Caco-2 (cell line): ENCODE measurements at regions of chr9 and their contacts with region 1.

Region 1: DNA sequence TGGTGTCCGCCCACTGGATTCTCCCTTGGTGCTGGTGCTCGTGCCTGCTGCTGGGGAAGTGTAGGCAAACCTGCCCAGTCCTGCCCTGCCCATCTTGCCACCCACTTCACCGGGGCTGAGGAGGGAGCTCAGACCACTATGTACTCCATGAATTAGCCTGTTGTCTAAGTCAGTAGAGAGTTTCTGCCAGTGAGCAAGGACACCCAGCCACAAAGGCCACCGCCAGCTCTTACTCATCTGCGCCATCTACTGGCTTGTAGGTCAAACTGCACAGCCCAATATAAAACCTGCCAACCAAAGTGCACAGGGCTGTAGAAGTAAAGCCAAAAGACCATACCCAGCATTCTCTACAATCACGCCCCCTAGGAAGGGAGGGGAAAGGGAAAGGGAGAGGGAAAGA is 102.3 kb downstream of the GLIS3 start:
- DNase-seq: peak in 1 of 2 experiments; percentile 18
- H3K4me3 ChIP-seq: no peak overlapping the region
- H3K4me3 Mint-ChIP-seq: no peak overlapping the region
- H3K27ac Mint-ChIP-seq: no peak overlapping the region
- H3K4me1 ChIP-seq: no peaks in the 10 kb centered on the region
- H3K4me1 Mint-ChIP-seq: no peaks in the 10 kb centered on the region
- H3K27me3 ChIP-seq: no peaks in the 10 kb centered on the region
- H3K27me3 Mint-ChIP-seq: no peaks in the 10 kb centered on the region
- CTCF ChIP-seq: peak; percentile 16 to 33

Region 2: DNA sequence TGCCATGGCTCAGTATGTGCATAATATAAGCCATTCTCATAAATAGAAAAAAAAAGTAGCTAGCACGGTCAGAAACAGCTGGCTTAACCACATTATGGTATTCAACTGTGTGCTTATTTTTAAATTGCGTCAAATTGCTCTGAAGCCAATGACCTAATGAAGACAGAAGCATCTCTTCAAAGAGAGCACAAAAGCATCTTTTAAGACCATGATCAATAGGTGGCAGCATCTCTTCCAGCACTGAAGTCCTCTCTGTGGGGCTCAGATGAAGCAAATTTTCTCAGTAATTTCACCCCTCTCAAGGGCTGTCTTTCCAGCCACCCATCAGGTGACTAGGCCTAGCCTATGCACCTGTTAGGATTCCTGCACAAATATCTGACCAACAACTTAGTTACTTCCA is 149.1 kb before region 1 on chr9:
- CTCF ChIA-PET with region 1: no interaction called
- POLR2A ChIA-PET with region 1: no interaction called
- intact Hi-C with region 1: loop called (anchors 1 kb)
- DNase-seq: peak; percentile 15 to 34
- H3K4me3 ChIP-seq: no peak overlapping the region
- H3K4me3 Mint-ChIP-seq: no peak overlapping the region
- H3K27ac Mint-ChIP-seq: no peak overlapping the region
- H3K4me1 ChIP-seq: 0 out of 2 replicates have a peak, but pooled peaks cover 3% of the 10 kb centered on the region
- H3K4me1 Mint-ChIP-seq: no peaks in the 10 kb centered on the region
- H3K27me3 ChIP-seq: no peaks in the 10 kb centered on the region
- H3K27me3 Mint-ChIP-seq: no peaks in the 10 kb centered on the region
- CTCF ChIP-seq: peak; percentile 35 to 40

Region 3: GRCh38 chr9:4077499-4078102 is 119.9 kb before region 1 on chr9:
- CTCF ChIA-PET with region 1: no interaction called
- POLR2A ChIA-PET with region 1: no interaction called
- intact Hi-C with region 1: loop called (anchors 5 kb)
- DNase-seq: peak; percentile 49 to 69
- H3K4me3 ChIP-seq: no peak overlapping the region
- H3K4me3 Mint-ChIP-seq: no peak overlapping the region
- H3K27ac Mint-ChIP-seq: no peak overlapping the region
- H3K4me1 ChIP-seq: peaks cover 20% of the 10 kb centered on the region
- H3K4me1 Mint-ChIP-seq: peaks cover 26% of the 10 kb centered on the region
- H3K27me3 ChIP-seq: no peaks in the 10 kb centered on the region
- H3K27me3 Mint-ChIP-seq: no peaks in the 10 kb centered on the region
- CTCF ChIP-seq: peak; percentile 36 to 50

Region 4: GRCh38 chr9:4155221-4156026 is 42.1 kb before region 1 on chr9:
- CTCF ChIA-PET with region 1: no interaction called
- POLR2A ChIA-PET with region 1: no interaction called
- intact Hi-C with region 1: no loop called
- DNase-seq: no peak
- H3K4me3 ChIP-seq: no peak overlapping the region
- H3K4me3 Mint-ChIP-seq: no peak overlapping the region
- H3K27ac Mint-ChIP-seq: peak overlapping the region; percentile 9
- H3K4me1 ChIP-seq: peaks cover 8% of the 10 kb centered on the region
- H3K4me1 Mint-ChIP-seq: peaks cover 6% of the 10 kb centered on the region
- H3K27me3 ChIP-seq: no peaks in the 10 kb centered on the region
- H3K27me3 Mint-ChIP-seq: no peaks in the 10 kb centered on the region
- CTCF ChIP-seq: no peak